ENCODE measurements at regions of chr18 and their contacts with region 1.

Region 1: DNA sequence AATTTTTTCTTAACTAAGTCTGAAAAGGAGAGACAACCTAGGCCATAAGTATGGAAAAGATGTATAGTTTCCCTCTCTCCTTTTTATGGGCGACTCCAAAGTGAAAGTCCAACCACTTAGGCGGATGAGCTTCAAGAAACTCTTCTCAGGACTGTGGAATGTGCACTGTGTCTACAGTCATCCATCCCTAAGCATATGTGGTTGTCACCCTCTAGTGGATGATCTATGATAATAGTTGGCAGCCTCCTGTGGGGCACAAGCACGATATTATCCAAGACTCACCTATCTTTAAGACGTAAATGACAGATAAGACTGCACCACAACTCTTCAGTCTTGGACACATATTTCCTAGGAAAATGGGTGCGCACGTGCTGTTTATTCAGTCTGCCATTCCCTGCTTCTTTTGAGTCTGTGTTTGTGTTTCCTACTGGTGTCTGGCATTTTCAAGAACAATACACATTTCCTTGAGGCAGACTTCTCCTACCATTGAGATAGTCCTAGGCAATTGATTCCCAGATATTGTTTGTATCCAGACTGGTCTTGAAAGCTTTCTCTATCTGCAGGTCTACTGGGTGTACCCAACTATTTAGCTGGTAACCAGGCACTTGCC is 145.5 kb upstream of the CTAGE1 start:
- DNase-seq: peak in 1 of 2 donors; percentile 74
- H3K4me3 ChIP-seq: peak overlapping the region; percentile 21 to 57
- H3K27ac ChIP-seq: peak overlapping the region; percentile 92 to 99
- H3K4me1 ChIP-seq: peaks cover 0 to 16% of the 10 kb centered on the region in 2 donors
- H3K27me3 ChIP-seq: no peaks in the 10 kb centered on the region
- CTCF ChIP-seq: peak; percentile 62 to 84 (median 79)

Region 2: GRCh38 chr18:21914739-21915319 is 648.4 kb before region 1 on chr18:
- intact Hi-C with region 1: loop called (anchors 10 kb)
- DNase-seq: no peak
- H3K4me3 ChIP-seq: no peak overlapping the region
- H3K27ac ChIP-seq: no peak overlapping the region
- H3K4me1 ChIP-seq: no peaks in the 10 kb centered on the region
- H3K27me3 ChIP-seq: no peaks in the 10 kb centered on the region
- CTCF ChIP-seq: peak in 2 of 3 experiments; percentile 29 to 47

Region 3: GRCh38 chr18:21997207-21998143 is 565.7 kb before region 1 on chr18:
- intact Hi-C with region 1: loop called (anchors 2 kb)
- DNase-seq: no peak
- H3K4me3 ChIP-seq: no peak overlapping the region
- H3K27ac ChIP-seq: peak overlapping the region; percentile 53 to 54
- H3K4me1 ChIP-seq: peaks cover 0 to 21% of the 10 kb centered on the region in 2 donors
- H3K27me3 ChIP-seq: no peaks in the 10 kb centered on the region
- CTCF ChIP-seq: peak; percentile 40 to 87 (median 82)

Region 4: GRCh38 chr18:22432672-22433137 is 130.5 kb before region 1 on chr18:
- intact Hi-C with region 1: loop called (anchors 2 kb)
- DNase-seq: peak; percentile 51 to 94
- H3K4me3 ChIP-seq: peak overlapping the region in 1 of 2 donors; percentile 60
- H3K27ac ChIP-seq: peak overlapping the region; percentile 68 to 86
- H3K4me1 ChIP-seq: peaks cover 7 to 9% of the 10 kb centered on the region in 2 donors
- H3K27me3 ChIP-seq: no peaks in the 10 kb centered on the region
- CTCF ChIP-seq: no peak

Region 5: GRCh38 chr18:22494771-22495170 is 68.4 kb before region 1 on chr18:
- intact Hi-C with region 1: loop called (anchors 5 kb)
- DNase-seq: peak in 1 of 2 donors; percentile 66
- H3K4me3 ChIP-seq: no peak overlapping the region
- H3K27ac ChIP-seq: peak overlapping the region; percentile 73 to 75
- H3K4me1 ChIP-seq: peaks cover 5 to 13% of the 10 kb centered on the region in 2 donors
- H3K27me3 ChIP-seq: no peaks in the 10 kb centered on the region
- CTCF ChIP-seq: no peak

Region 6: GRCh38 chr18:22650247-22650646 is 87.0 kb after region 1 on chr18:
- intact Hi-C with region 1: no loop called
- DNase-seq: no peak
- H3K4me3 ChIP-seq: no peak overlapping the region
- H3K27ac ChIP-seq: no peak overlapping the region
- H3K4me1 ChIP-seq: no peaks in the 10 kb centered on the region
- H3K27me3 ChIP-seq: no peaks in the 10 kb centered on the region
- CTCF ChIP-seq: no peak

Region 7: GRCh38 chr18:24039671-24040070 is 1476.5 kb after region 1 on chr18:
- intact Hi-C with region 1: no loop called
- DNase-seq: no peak
- H3K4me3 ChIP-seq: no peak overlapping the region
- H3K27ac ChIP-seq: no peak overlapping the region
- H3K4me1 ChIP-seq: no peaks in the 10 kb centered on the region
- H3K27me3 ChIP-seq: no peaks in the 10 kb centered on the region
- CTCF ChIP-seq: no peak

Measured in ascending aorta (tissue), 2 donors.